B cell (primary cell): ENCODE measurements at regions of chr15 and their contacts with region 1.

Region 1: DNA sequence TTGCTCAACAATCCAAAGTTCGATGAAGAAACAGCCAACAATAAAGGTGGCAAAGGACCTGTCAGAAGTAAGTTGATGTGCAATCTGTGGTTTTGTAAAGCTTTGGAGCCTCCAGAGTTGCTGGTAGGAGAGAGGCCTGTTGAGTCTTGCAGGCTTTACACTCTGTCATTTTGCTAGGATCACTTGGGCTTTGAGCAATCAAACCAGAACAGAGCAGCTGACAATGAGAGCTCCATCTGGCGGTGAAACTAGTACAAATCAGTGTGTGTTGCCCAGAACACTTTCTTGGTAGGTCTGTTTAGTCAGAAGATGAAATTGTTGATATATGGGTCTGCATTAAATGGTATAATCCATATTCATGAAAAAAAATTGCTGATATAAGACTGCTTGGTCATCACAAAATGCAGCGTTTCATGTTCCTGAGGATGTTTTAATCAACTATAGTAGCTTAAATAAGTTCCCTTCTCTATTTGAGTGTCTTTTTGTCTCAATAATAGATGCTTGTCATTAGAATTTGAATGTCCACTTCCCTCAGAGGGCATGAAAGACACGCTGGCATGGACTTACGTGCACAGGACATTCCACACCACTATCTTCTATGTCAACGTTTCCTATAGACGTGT is 25.7 kb downstream of the TMOD2 start:
- DNase-seq: peak; percentile 79
- ATAC-seq: peak; percentile 75
- H3K4me3 ChIP-seq: no peak overlapping the region
- H3K4me3 Mint-ChIP-seq: no peak overlapping the region
- H3K27ac ChIP-seq: no peak overlapping the region
- H3K27ac Mint-ChIP-seq: no peak overlapping the region
- H3K4me1 ChIP-seq: peaks cover 0 to 4% of the 10 kb centered on the region in 2 donors
- H3K4me1 Mint-ChIP-seq: peaks cover 13% of the 10 kb centered on the region
- H3K27me3 ChIP-seq: no peaks in the 10 kb centered on the region
- H3K27me3 Mint-ChIP-seq: no peaks in the 10 kb centered on the region
- CTCF ChIP-seq: peak; percentile 72

Region 2: GRCh38 chr15:51649659-51650521 is 127.2 kb before region 1 on chr15:
- CTCF ChIA-PET with region 1: interaction called, 728 read pairs
- POLR2A ChIA-PET with region 1: interaction called, 5 read pairs
- intact Hi-C with region 1: loop called (anchors 1 kb)
- DNase-seq: peak; percentile 80
- ATAC-seq: peak; percentile 75
- H3K4me3 ChIP-seq: no peak overlapping the region
- H3K4me3 Mint-ChIP-seq: no peak overlapping the region
- H3K27ac ChIP-seq: no peak overlapping the region
- H3K27ac Mint-ChIP-seq: no peak overlapping the region
- H3K4me1 ChIP-seq: no peaks in the 10 kb centered on the region
- H3K4me1 Mint-ChIP-seq: no peaks in the 10 kb centered on the region
- H3K27me3 ChIP-seq: no peaks in the 10 kb centered on the region
- H3K27me3 Mint-ChIP-seq: no peaks in the 10 kb centered on the region
- CTCF ChIP-seq: peak; percentile 94

Region 3: GRCh38 chr15:51667478-51667877 is 109.6 kb before region 1 on chr15:
- CTCF ChIA-PET with region 1: interaction called, 16 read pairs
- POLR2A ChIA-PET with region 1: no interaction called
- intact Hi-C with region 1: no loop called
- DNase-seq: no peak
- ATAC-seq: no peak
- H3K4me3 ChIP-seq: no peak overlapping the region
- H3K4me3 Mint-ChIP-seq: no peak overlapping the region
- H3K27ac ChIP-seq: no peak overlapping the region
- H3K27ac Mint-ChIP-seq: no peak overlapping the region
- H3K4me1 ChIP-seq: no peaks in the 10 kb centered on the region
- H3K4me1 Mint-ChIP-seq: no peaks in the 10 kb centered on the region
- H3K27me3 ChIP-seq: no peaks in the 10 kb centered on the region
- H3K27me3 Mint-ChIP-seq: peaks cover 21% of the 10 kb centered on the region
- CTCF ChIP-seq: no peak

Region 4: GRCh38 chr15:51688863-51689262 is 88.2 kb before region 1 on chr15:
- CTCF ChIA-PET with region 1: interaction called, 15 read pairs
- POLR2A ChIA-PET with region 1: no interaction called
- intact Hi-C with region 1: no loop called
- DNase-seq: no peak
- ATAC-seq: no peak
- H3K4me3 ChIP-seq: no peak overlapping the region
- H3K4me3 Mint-ChIP-seq: no peak overlapping the region
- H3K27ac ChIP-seq: no peak overlapping the region
- H3K27ac Mint-ChIP-seq: no peak overlapping the region
- H3K4me1 ChIP-seq: peaks cover 7 to 9% of the 10 kb centered on the region in 2 donors
- H3K4me1 Mint-ChIP-seq: peaks cover 11% of the 10 kb centered on the region
- H3K27me3 ChIP-seq: peaks cover 0 to 6% (median under 1%) of the 10 kb centered on the region in 4 experiments
- H3K27me3 Mint-ChIP-seq: peaks cover 25% of the 10 kb centered on the region
- CTCF ChIP-seq: no peak

Region 5: GRCh38 chr15:51731549-51732267 is 45.4 kb before region 1 on chr15:
- CTCF ChIA-PET with region 1: interaction called, 78 read pairs
- POLR2A ChIA-PET with region 1: interaction called, 16 read pairs
- intact Hi-C with region 1: loop called (anchors 1 kb)
- DNase-seq: peak; percentile 91
- ATAC-seq: peak; percentile 72
- H3K4me3 ChIP-seq: peak overlapping the region; percentile 24 to 76 (median 53)
- H3K4me3 Mint-ChIP-seq: peak overlapping the region; percentile 88
- H3K27ac ChIP-seq: peak overlapping the region; percentile 85 to 92
- H3K27ac Mint-ChIP-seq: peak overlapping the region; percentile 94
- H3K4me1 ChIP-seq: peaks cover 93 to 100% of the 10 kb centered on the region in 2 donors
- H3K4me1 Mint-ChIP-seq: peaks cover 94% of the 10 kb centered on the region
- H3K27me3 ChIP-seq: no peaks in the 10 kb centered on the region
- H3K27me3 Mint-ChIP-seq: no peaks in the 10 kb centered on the region
- CTCF ChIP-seq: no peak

Region 6: DNA sequence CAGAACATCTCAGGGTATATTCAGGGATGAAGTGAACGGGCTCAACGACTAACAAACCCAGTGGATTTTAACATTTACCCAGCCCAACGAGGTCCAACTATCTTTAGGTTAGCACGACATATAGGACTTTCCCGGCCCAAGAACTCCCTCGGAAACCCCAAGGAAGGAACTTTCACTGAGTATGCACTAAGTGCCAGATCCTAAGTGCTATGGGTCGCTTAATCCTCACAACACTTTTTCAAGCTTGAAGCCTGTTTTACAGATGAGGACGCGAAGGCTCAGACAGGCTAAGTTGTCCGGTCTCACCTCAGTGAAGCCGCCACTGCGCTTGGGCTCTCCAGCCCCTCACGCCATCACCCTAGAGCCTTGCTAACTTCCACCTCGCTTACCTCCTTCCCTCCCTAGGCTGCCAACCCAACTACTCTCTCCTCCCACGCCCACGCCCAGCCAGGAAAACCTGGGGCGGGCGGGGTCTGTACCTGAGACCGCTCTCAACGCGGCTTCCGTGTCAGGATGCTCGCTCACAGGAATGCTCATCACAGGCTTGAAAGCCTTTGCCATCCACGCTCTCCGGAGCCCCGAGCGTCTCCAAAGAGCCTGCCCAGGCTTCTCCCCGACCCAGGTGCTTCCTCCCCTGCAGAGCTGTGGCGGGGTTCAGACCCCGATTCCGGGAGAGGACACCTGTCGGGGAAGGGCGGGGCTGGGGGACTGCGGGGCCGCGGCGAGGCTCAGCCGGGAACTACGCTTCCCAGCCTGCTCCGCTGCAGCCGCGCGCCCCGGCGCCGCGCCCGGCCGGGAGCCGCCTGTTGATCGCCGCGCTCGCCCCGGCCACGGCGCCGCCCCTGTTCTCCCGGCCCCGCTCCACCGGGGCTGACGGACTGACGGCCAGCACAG is 26.0 kb before region 1 on chr15 and contains the start of gene TMOD2:
- CTCF ChIA-PET with region 1: interaction called, 35 read pairs
- POLR2A ChIA-PET with region 1: no interaction called
- intact Hi-C with region 1: no loop called
- DNase-seq: peak; percentile 68
- ATAC-seq: peak; percentile 84
- H3K4me3 ChIP-seq: peak within 1 kb of the TSS; percentile 32 to 72 (median 63)
- H3K4me3 Mint-ChIP-seq: peak within 1 kb of the TSS; percentile 95
- H3K27ac ChIP-seq: peak within 1 kb of the TSS; percentile 18 to 31
- H3K27ac Mint-ChIP-seq: peak within 1 kb of the TSS; percentile 87
- H3K4me1 ChIP-seq: peaks cover 14 to 24% of the 10 kb centered on the region in 2 donors
- H3K4me1 Mint-ChIP-seq: peaks cover 43% of the 10 kb centered on the region
- H3K27me3 ChIP-seq: no peaks in the 10 kb centered on the region
- H3K27me3 Mint-ChIP-seq: no peaks in the 10 kb centered on the region
- CTCF ChIP-seq: no peak
- total RNA-seq, gene TMOD2: 25.9 and 30.3 TPM in 2 replicates